Transverse colon (tissue), 4 donors: ENCODE measurements at regions of chr7 and their contacts with region 1.

Region 1: DNA sequence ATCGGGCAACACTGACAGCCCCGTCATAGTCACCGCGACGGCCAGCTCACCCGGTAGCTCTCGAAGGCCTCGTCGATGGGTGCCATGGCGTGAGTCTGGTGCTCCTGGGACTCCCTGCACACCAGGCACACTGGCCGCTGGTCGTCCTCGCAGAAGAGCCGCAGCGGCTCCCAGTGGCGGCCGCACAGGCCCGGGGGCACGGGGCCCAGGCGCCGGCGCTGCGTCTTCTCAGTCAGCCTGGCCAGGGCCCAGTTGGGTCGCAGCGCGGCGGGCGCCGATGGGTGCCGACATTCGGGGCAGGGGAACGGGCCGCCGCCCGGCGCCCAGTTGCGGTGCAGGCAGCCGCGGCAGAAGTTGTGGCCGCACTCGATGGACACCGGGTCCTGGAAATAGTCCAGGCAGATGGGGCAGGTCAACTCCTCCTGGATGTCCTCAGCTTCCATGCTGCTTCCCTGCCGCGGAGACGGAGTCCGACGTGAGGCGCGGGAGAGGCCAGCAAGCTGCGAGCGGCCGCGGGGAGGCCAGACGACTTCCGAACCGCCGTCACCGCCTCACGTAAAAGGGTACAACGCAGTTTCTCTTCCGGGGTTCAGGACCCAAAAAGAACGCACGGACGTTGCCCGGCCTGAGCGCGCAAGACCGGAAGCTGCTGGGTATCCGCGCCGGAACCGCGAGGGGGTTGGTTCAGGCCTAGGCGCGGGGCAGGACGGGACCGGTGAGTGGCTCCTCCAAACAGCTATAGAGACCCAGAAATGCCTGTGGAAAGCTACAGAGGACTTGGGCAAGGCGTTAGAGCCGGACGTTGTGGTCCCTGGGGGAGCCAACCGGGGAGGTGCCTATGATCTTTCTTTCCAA is at the start of gene TRIM4:
- DNase-seq: peak; percentile 94
- H3K4me3 ChIP-seq: peak within 1 kb of the TSS; percentile 72 to 95 (median 88)
- H3K27ac ChIP-seq: peak within 1 kb of the TSS; percentile 94 to 97 (median 94)
- H3K4me1 ChIP-seq: peaks cover 23 to 39% (median 26%) of the 10 kb centered on the region in 4 donors
- H3K27me3 ChIP-seq: no peaks in the 10 kb centered on the region
- CTCF ChIP-seq: peak in 4 of 5 experiments; percentile 8 to 34 (median 26)
- EP300 ChIP-seq: no peak
- POLR2A ChIP-seq: peak; percentile 90
- total RNA-seq, gene TRIM4: 20.9 to 43.3 (median 39.6) TPM

Region 2: DNA sequence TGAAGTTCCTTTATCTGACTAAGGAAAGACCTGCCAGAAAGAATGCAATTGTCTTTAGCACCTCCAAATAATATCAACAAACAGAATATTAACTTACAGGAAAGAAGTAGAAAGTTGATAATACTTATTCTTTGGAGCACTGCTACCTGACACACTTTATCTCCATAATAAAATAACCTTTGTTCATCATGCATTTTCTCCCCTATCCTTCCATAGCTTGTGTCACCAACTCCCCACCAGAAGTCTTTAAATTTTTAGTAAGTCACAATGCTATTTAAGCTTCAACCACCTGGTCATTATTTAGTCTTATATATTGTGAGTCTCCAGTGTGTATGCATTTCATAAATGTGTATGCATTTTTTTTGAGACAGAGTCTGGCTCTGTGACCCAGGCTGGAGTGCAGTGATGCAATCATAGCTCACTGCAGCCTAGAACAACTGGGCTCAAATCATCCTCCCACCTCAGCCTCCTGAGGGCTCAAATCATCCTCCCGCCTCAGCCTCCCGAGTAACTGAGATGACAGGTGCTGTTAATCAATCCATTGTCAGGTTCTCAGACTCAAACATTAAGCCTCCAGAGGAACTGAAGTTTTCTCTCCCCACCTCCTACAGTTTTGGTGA is 98.7 kb before region 1 on chr7:
- in situ Hi-C with region 1: no loop called
- intact Hi-C with region 1: no loop called
- DNase-seq: no peak
- H3K4me3 ChIP-seq: no peak overlapping the region
- H3K27ac ChIP-seq: no peak overlapping the region
- H3K4me1 ChIP-seq: peaks cover 0 to 13% (median 5%) of the 10 kb centered on the region in 4 donors
- H3K27me3 ChIP-seq: no peaks in the 10 kb centered on the region
- CTCF ChIP-seq: no peak
- EP300 ChIP-seq: no peak
- POLR2A ChIP-seq: no peak

Region 3: DNA sequence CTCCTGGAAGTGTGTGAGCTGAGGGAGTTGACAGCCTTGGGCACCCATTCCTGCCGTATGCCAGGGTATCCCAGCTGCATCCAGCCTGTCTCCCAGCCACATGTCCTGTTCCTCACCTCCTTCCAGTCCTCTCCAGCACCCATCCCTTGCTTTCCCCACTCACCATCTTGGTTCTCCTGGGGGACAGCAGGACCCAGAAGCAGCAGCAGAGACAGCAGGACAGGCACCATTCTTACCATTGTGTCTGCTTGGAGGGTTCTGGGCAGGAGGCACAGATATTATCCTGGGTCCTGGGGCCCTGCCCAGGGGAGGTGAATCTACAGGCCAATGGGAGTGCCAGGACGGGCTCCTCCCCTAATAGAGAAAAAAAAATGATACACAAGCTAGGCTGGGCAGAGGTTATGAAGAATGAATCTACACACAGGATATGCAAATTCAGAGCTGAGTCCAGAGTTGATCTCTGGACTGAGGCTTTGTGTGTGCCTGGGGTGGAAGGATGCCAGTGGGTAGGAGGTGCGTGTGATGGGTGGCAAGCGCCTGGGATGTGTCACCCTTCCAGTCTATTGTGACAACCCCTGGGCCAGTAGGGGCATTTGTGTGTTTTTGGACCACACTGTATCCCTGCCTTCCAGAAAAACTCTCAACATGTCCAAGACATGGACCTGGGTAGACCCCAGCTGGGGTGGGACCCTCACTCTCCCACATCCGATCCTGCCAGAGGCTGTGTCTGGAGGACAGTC is 56.8 kb after region 1 on chr7 and contains the start of gene AZGP1:
- in situ Hi-C with region 1: no loop called
- intact Hi-C with region 1: loop called (anchors 2 kb)
- DNase-seq: peak; percentile 41
- H3K4me3 ChIP-seq: no peak within 1 kb of the TSS
- H3K27ac ChIP-seq: no peak within 1 kb of the TSS
- H3K4me1 ChIP-seq: no peaks in the 10 kb centered on the region
- H3K27me3 ChIP-seq: no peaks in the 10 kb centered on the region
- CTCF ChIP-seq: no peak
- EP300 ChIP-seq: no peak
- POLR2A ChIP-seq: no peak
- total RNA-seq, gene AZGP1: 3.2 to 17.1 TPM in 2 of 4 donors, not detected in the others

Region 4: DNA sequence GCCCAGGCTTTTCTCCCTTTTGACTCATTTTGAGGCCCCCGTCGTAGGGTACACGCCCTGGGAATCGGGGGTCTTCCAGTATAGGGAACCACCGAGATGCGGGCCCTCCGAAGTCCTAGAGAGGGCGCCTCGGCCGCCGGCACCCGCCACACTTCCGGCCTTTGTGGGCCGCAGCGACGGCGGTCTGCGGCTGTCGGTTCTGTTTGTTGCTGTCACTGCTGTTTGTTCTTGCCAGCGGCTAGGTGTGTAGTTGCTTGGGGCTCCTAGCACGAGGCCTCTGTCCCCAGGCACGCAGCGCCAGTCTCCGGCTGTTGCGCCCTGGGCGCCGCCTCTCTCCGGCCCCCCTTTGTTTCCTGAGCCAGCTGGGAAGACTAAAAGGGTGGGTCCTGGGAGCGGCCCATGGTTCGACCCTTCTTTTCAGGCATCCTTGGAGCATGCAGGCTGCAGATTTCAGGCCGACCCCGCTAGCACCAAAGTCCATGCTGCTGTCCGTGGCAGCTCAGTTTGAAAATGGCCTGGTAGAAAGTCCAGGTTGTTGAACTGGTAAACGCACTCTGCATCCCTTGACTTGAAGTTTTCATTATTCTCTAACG is 78.5 kb after region 1 on chr7:
- in situ Hi-C with region 1: loop called in 3 of 4 experiments (anchors 10 kb)
- intact Hi-C with region 1: no loop called
- DNase-seq: peak; percentile 77
- H3K4me3 ChIP-seq: peak overlapping the region; percentile 32 to 56 (median 40)
- H3K27ac ChIP-seq: peak overlapping the region; percentile 81 to 88 (median 84)
- H3K4me1 ChIP-seq: peaks cover 8 to 31% (median 23%) of the 10 kb centered on the region in 4 donors
- H3K27me3 ChIP-seq: no peaks in the 10 kb centered on the region
- CTCF ChIP-seq: peak; percentile 35 to 68 (median 55)
- EP300 ChIP-seq: no peak
- POLR2A ChIP-seq: peak; percentile 55

Region 5: GRCh38 chr7:100049441-100050311 is 130.5 kb after region 1 on chr7 and contains the start of gene ZSCAN21:
- in situ Hi-C with region 1: loop called in 3 of 4 experiments (anchors 25 kb)
- intact Hi-C with region 1: no loop called
- DNase-seq: peak; percentile 87
- H3K4me3 ChIP-seq: peak within 1 kb of the TSS; percentile 71 to 86 (median 81)
- H3K27ac ChIP-seq: peak within 1 kb of the TSS; percentile 91 to 97 (median 96)
- H3K4me1 ChIP-seq: peaks cover 7 to 32% (median 15%) of the 10 kb centered on the region in 4 donors
- H3K27me3 ChIP-seq: no peaks in the 10 kb centered on the region
- CTCF ChIP-seq: peak in 2 of 5 experiments; percentile 16 to 22
- EP300 ChIP-seq: no peak
- POLR2A ChIP-seq: peak; percentile 80
- total RNA-seq, gene ZSCAN21: 0.75 to 28.7 (median 10.0) TPM